Adrenal gland (tissue), 19 donors: ENCODE measurements at regions of chr3 and their contacts with region 1.

Region 1: DNA sequence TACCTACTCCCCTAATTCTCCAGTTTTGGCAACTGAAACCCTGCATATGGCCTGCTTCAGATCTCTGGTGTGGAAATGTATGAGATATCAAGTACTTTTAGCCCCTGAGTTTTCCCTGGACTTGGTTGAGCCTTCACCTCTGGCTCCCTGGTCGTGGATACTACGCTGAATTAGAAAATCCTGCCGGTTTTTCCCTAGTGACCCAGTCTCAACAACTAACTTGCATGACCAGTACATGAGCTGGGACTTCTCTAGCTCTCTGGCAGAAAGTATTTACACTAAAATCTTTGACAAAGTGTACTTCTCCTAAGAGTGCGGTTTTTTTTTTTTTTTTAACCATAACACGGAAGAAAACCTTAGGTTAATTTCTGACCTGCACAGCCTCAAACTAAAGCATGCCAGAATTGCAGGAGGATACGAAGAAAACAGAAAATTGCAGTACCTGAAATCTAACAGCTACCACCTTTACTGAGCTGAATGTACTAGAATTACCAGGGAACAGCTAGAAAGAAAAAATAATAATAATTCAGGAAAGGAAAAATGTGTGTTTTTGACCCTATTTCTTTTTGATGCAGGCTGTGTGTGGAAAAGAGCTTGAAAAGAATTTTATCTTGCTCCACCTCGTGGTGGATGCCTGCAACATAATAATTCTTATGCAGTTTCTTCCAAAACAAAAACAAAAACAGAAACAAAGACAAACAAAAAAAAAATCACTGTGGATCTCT is 165.6 kb downstream of the GMNC start:
- DNase-seq: peak in 4 of 7 donors; percentile 8 to 33 (median 20)
- H3K4me3 ChIP-seq: no peak overlapping the region
- H3K27ac ChIP-seq: no peak overlapping the region
- H3K4me1 ChIP-seq: peaks cover 0 to 8% of the 10 kb centered on the region in 2 donors
- H3K27me3 ChIP-seq: no peaks in the 10 kb centered on the region
- CTCF ChIP-seq: peak; percentile 47 to 66 (median 56)
- POLR2A ChIP-seq: no peak

Region 2: DNA sequence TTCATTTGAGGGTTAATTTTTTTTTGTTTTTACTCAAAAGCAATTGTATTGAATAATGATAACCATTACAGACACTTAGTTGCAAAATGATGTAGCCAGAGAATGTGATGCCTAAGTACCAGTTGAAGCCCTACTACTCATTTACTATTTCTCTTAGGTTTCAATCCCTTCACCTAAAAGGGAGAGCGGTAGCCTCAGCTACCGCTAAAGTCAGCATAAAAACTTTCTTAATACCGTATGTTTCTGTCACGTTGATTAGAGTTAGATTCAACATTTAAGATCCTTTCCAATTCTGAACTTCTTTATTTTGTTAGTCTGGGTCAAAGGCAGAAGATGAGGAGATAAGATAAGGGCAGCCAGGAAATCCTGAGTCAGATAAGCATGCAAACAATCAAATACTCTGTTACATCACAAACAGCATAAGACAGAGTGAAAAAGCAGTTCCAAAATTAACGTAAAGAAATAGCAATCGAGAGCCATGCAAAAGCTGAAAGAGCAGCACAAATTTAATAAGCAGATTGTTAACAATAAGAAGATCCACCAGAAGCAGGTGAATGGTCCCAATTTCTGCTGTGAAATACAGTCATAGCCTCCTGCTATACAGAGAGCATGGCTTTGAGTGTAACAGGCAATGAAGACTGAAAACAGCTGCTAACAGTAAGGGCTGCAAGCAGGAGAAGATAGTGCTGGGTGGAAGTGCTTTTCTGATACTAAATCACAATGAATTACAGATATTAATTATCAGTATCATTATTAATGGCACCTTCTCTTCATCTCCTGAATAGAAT is 250.3 kb before region 1 on chr3:
- intact Hi-C with region 1: no loop called
- DNase-seq: peak in 4 of 7 donors; percentile 19 to 53 (median 42)
- H3K4me3 ChIP-seq: no peak overlapping the region
- H3K27ac ChIP-seq: peak overlapping the region; percentile 41 to 72 (median 52)
- H3K4me1 ChIP-seq: peaks cover 0 to 21% of the 10 kb centered on the region in 2 donors
- H3K27me3 ChIP-seq: no peaks in the 10 kb centered on the region
- CTCF ChIP-seq: no peak
- POLR2A ChIP-seq: no peak

Region 3: DNA sequence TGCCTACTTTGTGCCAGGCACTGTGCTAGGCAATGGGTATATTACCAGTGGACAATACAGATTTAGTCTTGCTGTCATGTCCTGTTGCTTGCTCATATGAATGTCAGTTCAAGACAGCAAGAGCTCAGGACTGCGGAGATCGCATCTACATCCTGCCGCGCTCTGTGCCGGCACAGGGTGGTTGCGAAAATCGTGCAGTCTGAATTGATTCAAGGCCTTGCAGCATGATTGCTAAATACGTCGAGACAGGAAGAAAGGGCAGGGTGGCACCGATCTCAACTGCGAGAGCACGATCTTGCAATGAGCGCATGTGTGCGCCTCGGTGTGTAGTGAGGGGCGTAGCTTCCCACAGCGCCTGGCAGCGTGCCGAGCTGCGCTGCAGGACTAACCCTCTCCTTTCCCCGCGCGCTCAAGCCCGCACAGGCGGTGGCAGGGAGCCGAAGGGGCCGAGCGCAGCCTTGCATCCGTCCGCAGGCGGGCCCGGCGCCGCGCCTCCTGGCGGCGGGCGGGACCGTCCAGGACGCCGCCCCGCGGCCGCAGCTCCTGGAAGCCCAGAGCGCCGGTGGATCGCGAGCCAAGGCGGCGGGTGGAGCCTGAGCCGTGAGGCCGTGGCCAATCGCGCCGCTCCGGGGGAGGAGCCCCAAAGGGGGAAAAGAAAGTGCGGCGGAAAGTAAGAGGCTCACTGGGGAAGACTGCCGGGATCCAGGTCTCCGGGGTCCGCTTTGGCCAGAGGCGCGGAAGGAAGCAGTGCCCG is 183.4 kb before region 1 on chr3 and contains the start of gene IL1RAP:
- intact Hi-C with region 1: loop called in 1 of 2 experiments (anchors 5 kb)
- DNase-seq: peak; percentile 89 to 94 (median 92)
- H3K4me3 ChIP-seq: peak within 1 kb of the TSS; percentile 65 to 95 (median 70)
- H3K27ac ChIP-seq: peak within 1 kb of the TSS; percentile 37 to 93 (median 74)
- H3K4me1 ChIP-seq: no peaks in the 10 kb centered on the region
- H3K27me3 ChIP-seq: no peaks in the 10 kb centered on the region
- CTCF ChIP-seq: peak; percentile 8 to 97 (median 68)
- POLR2A ChIP-seq: peak; percentile 77 to 85
- total RNA-seq, gene IL1RAP: 4.2 to 17.1 (median 7.9) TPM